Left cardiac atrium (tissue), 4 donors: ENCODE measurements at regions of chr7 and their contacts with region 1.

Region 1: GRCh38 chr7:26365077-26365900 is 73.6 kb downstream of the SNX10 start:
- DNase-seq: no peak
- ATAC-seq: peak; percentile 75 to 88

Region 2: DNA sequence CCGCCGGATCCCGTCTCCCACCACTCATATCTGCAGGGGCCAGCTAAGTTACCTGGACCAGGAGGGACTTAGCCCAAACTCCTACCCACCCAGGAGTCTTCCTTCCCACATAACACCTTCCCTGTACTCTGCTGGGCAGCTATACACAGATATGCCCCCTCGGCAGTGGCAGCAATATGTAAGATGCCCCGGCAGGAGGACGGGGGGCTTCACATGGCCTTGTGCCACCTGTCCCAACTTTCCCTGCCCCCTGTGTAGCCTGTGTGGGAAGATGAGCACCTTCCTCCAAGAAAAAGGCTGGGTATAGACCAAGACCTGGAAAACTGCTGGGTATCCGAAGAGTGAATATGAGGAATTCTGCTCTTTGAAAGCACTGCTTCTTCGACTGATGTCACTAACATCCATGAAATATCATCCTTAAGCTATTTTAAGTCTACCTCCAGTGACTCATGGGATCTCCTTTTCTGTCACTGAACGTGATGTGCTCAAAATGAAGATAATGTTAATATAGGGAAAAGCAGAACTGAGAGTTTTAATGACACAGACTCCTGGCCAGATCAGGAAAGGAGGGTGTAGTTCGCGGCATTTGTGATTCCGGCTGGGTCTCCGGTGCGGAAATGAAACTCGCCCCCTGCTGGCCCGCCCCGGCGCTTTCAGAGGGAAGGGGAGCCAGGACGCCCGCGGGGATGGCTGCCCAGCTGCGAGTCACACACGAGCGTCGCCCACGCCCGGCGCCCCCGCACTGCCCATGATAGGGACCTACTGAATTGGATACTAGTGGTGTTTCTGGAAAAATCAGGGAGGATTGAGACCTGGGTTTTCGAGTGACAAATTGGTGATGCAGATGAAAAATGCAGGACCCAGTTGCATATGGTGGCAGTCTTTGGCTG is 470.1 kb before region 1 on chr7:
- intact Hi-C with region 1: loop called (anchors 2 to 5 kb)
- DNase-seq: peak; percentile 74
- ATAC-seq: peak; percentile 80 to 88

Region 3: GRCh38 chr7:26083113-26083512 is 282.2 kb before region 1 on chr7:
- intact Hi-C with region 1: loop called in 1 of 2 experiments (anchors 10 kb)
- DNase-seq: no peak
- ATAC-seq: no peak

Region 4: GRCh38 chr7:26090927-26091519 is 274.3 kb before region 1 on chr7:
- intact Hi-C with region 1: loop called (anchors 2 to 10 kb)
- DNase-seq: no peak
- ATAC-seq: peak; percentile 63 to 80

Region 5: DNA sequence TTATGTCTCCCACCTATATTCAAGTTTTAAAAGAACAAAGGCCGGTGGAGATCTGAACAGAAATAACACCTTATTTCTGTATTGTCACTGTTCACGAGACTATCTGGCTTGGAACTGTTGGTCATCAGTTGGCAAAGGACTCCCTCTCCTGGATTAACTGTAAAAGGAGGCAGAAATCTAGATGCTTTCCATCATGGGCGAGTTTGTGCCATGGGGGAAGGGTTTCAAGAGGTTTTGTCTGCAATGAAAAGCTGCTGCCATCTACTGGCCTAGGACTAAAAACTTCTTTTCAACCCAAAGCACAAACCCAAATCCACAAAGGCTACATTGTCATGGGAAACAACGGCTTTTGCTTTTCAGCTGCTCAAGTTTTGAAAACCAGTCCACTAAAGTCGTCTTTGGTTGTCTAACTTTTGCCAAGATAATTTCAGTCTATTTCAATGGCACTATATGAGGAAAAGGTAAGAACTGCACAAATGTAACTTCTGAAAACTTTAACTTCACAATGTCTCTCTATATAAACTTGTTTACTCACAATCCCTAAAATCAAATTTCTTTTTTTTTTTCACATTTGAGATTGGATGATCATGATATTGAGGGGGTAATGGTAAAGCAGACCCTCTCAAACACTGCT is 302.3 kb after region 1 on chr7:
- intact Hi-C with region 1: loop called (anchors 1 to 5 kb)
- DNase-seq: peak; percentile 51
- ATAC-seq: peak; percentile 88 to 92

Region 6: GRCh38 chr7:27160546-27161213 is 795.4 kb after region 1 on chr7:
- intact Hi-C with region 1: loop called in 1 of 2 experiments (anchors 5 kb)
- DNase-seq: peak; percentile 87
- ATAC-seq: peak; percentile 84